ENCODE measurements at regions of chr17 and their contacts with region 1.

Region 1: DNA sequence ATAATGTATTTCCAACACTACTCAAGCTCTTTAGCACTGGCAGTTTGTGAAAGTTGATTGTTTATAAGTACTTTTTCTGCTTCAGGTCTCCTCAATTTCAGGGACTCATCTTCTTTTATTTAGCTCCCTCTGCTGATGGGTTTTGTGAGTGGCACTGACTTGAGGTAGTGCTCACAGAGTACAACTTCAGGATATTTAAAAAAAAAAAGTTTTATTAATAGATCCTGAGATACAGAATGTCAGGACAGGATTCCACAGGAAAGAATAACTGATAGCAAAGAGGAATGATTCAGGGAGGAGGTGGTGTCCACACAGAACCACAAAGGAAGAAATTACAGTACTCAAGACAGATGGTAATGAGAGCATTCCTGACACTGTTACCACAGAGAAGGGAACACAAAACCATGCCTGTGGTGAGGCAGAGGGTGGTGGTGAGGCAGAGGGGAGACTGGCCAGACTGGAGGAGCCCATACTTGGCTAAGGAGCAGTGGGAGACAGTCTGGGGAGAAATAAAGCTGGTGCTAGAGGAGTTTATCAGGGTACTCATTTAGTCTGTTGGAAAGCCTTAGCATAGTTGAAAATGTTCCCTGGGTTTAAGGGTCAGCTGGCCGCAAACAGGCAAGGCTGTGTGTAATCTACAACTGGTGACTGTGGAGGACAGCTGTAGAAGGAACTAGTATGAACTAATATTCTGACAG is 63.7 kb downstream of the SPAG9 start:
- DNase-seq: peak; percentile 49
- H3K4me3 ChIP-seq: peak overlapping the region in 1 of 2 experiments; percentile 5; a peak in 1 of 4 replicates
- H3K27ac ChIP-seq: peak overlapping the region; percentile 51 to 78
- H3K4me1 ChIP-seq: peaks cover 6 to 10% of the 10 kb centered on the region in 2 experiments; a peak in 3 of 4 replicates
- H3K27me3 ChIP-seq: no peaks in the 10 kb centered on the region
- CTCF ChIP-seq: peak; percentile 98
- EP300 ChIP-seq: 0 out of 4 replicates have a peak, but pooled peaks of 1 of the 2 experiments have one; percentile 6
- RAD21 ChIP-seq: peak; percentile 94

Region 2: GRCh38 chr17:51000835-51001638 is 55.9 kb before region 1 on chr17:
- CTCF ChIA-PET with region 1: interaction called, 247 read pairs
- POLR2A ChIA-PET with region 1: no interaction called
- DNase-seq: peak; percentile 63
- H3K4me3 ChIP-seq: no peak overlapping the region
- H3K27ac ChIP-seq: peak overlapping the region in 1 of 2 experiments; percentile 37; a peak in 2 of 4 replicates
- H3K4me1 ChIP-seq: no peaks in the 10 kb centered on the region
- H3K27me3 ChIP-seq: no peaks in the 10 kb centered on the region
- CTCF ChIP-seq: peak; percentile 89
- EP300 ChIP-seq: no peak
- RAD21 ChIP-seq: peak; percentile 96

Region 3: DNA sequence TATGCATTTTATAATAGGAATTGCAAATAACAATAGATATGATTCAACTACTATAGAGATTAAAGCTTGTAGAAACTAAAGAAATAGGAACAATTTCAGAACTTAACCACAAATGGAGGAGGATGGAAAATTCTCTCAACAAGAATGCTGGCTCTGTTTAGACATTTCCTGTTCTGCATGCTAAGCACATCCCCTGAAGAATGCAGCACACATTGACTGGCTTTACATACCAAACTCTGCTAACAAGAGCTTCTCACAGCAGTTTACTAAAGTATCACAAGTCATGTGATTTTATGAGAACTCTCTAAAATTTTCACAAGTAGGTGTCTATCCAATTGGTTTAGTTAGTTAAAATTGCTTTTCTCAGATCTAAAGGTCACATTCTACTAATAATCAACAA is 21.5 kb before region 1 on chr17:
- CTCF ChIA-PET with region 1: interaction called, 117 read pairs
- POLR2A ChIA-PET with region 1: no interaction called
- DNase-seq: no peak
- H3K4me3 ChIP-seq: no peak overlapping the region
- H3K27ac ChIP-seq: peak overlapping the region; percentile 69 to 83; a peak in 3 of 4 replicates
- H3K4me1 ChIP-seq: peaks cover 3 to 6% of the 10 kb centered on the region in 2 experiments
- H3K27me3 ChIP-seq: no peaks in the 10 kb centered on the region
- CTCF ChIP-seq: no peak
- EP300 ChIP-seq: no peak
- RAD21 ChIP-seq: no peak

Region 4: GRCh38 chr17:51078009-51078592 is 21.1 kb after region 1 on chr17:
- CTCF ChIA-PET with region 1: interaction called, 10 read pairs
- POLR2A ChIA-PET with region 1: no interaction called
- DNase-seq: no peak
- H3K4me3 ChIP-seq: no peak overlapping the region
- H3K27ac ChIP-seq: no peak overlapping the region
- H3K4me1 ChIP-seq: no peaks in the 10 kb centered on the region
- H3K27me3 ChIP-seq: no peaks in the 10 kb centered on the region
- CTCF ChIP-seq: no peak
- EP300 ChIP-seq: no peak
- RAD21 ChIP-seq: no peak

Region 5: DNA sequence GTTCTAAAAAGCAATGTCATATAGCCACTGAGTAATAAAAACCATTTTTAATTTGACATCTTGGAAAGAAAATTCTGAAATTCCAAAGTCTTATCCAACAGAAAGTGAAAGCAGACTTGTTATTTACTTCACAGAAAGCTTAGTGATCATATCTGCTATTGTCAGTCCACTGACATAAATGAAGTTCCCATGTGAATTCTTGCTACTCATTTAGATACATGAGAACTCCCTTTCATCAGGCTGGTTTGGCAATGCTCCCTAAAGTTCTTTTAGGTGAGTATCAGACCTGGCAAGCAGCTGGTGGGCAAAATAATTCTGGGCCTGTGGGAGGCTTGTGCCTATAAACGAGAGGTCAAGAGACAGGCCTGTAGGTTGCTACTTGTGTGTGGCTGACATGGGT is 132.7 kb after region 1 on chr17:
- CTCF ChIA-PET with region 1: no interaction called
- POLR2A ChIA-PET with region 1: no interaction called
- DNase-seq: no peak
- H3K4me3 ChIP-seq: no peak overlapping the region
- H3K27ac ChIP-seq: no peak overlapping the region
- H3K4me1 ChIP-seq: peaks cover 0 to 6% of the 10 kb centered on the region in 2 experiments; a peak in 2 of 4 replicates
- H3K27me3 ChIP-seq: no peaks in the 10 kb centered on the region
- CTCF ChIP-seq: no peak
- EP300 ChIP-seq: no peak
- RAD21 ChIP-seq: no peak